Heart left ventricle (tissue), 16 donors: ENCODE measurements at regions of chr16 and their contacts with region 1.

Region 1: GRCh38 chr16:59632276-59632855 is 898.2 kb upstream of the GOT2 start:
- DNase-seq: no peak
- ATAC-seq: no peak
- H3K4me3 ChIP-seq: no peak overlapping the region
- H3K27ac ChIP-seq: no peak overlapping the region
- H3K4me1 ChIP-seq: peaks cover 0 to 3% (median 0%) of the 10 kb centered on the region in 12 donors
- H3K27me3 ChIP-seq: no peaks in the 10 kb centered on the region
- CTCF ChIP-seq: no peak
- POLR2A ChIP-seq: no peak

Region 2: DNA sequence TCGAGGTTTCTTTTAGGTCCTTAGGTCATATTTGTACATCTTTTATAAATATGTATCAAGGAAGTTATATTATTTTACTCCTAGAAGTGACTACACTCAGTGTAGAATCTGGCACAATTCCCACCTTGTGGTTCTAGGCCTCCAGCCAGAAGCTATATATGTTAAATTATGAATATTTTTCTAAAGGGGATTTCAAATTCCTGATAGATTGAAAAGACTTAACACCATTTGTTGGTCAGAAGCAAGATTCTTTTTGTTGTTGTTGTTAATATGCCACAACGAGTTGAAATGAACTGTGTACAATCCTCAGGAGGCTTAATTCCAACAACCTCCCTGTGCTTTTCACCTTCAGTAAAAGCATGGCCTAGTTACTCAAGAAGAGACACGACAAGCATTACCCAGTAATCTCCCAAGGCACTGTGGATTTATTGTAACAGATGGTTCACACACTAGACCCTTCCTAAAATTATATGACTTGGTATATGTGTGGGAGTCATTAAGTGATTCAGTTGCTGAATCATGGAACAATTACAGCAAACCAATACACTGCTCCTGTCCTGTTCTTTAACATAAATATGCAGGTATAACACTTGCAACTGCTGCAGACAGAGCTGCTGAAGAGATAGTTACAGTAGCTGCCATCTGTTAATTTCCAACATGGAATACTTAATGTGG is 66.1 kb after region 1 on chr16:
- intact Hi-C with region 1: loop called in 1 of 10 experiments (anchors 10 kb)
- DNase-seq: no peak
- ATAC-seq: no peak
- H3K4me3 ChIP-seq: no peak overlapping the region
- H3K27ac ChIP-seq: no peak overlapping the region
- H3K4me1 ChIP-seq: no peaks in the 10 kb centered on the region
- H3K27me3 ChIP-seq: no peaks in the 10 kb centered on the region
- CTCF ChIP-seq: no peak
- POLR2A ChIP-seq: no peak

Region 3: GRCh38 chr16:59719121-59719520 is 86.8 kb after region 1 on chr16:
- intact Hi-C with region 1: no loop called
- DNase-seq: no peak
- ATAC-seq: no peak
- H3K4me3 ChIP-seq: no peak overlapping the region
- H3K27ac ChIP-seq: no peak overlapping the region
- H3K4me1 ChIP-seq: no peaks in the 10 kb centered on the region
- H3K27me3 ChIP-seq: no peaks in the 10 kb centered on the region
- CTCF ChIP-seq: no peak
- POLR2A ChIP-seq: no peak